PC-9 (cell line): ENCODE measurements at regions of chr7 and their contacts with region 1.

Region 1: GRCh38 chr7:100578338-100579183 is 4.9 kb upstream of the SAP25 start:
- DNase-seq: no peak
- H3K4me3 ChIP-seq: no peak overlapping the region
- H3K27ac ChIP-seq: no peak overlapping the region
- H3K4me1 ChIP-seq: peaks cover 6% of the 10 kb centered on the region
- H3K27me3 ChIP-seq: no peaks in the 10 kb centered on the region
- CTCF ChIP-seq: no peak

Region 2: DNA sequence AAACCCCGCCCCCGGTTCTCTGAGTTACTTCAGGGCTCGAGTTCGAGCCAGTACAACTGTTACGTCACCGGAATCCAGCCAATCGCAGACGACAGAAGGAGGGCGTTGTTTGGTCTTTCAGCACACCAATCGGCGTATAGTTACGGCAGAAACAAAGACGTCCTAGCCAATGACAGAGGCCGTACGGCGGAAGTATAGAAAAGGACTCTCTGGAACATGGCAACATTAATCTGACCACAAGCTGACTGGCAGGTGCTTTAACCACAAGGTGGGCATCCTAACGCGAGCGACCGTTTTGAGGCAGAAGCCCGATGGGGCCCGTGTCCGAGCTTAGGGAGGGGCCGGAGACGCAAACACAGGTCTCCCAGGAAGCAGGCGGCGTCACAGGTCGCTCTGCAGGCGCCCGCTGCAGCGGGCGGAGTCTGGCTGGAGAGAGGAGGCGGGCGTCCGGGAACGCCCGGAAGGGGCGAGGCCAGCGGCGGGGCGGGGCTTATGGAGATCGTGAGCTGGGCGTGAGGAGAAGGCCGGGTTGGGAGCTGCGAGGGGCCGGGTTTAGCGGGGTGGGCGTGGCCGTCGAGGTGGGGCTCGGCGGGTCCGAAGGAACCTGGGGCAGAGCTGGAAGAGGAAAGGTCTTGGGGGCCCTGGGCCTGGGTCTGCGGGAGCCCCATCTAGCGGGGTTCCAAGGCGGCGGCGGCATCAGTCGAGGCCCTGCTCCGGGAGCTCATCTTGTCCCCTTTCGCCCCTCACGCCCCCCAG is 33.6 kb after region 1 on chr7 and contains the start of gene MOSPD3:
- CTCF ChIA-PET with region 1: no interaction called
- POLR2A ChIA-PET with region 1: interaction called, 54 read pairs
- intact Hi-C with region 1: no loop called
- DNase-seq: peak; percentile 98 to 99
- H3K4me3 ChIP-seq: peak within 1 kb of the TSS; percentile 74
- H3K27ac ChIP-seq: peak within 1 kb of the TSS; percentile 60
- H3K4me1 ChIP-seq: peaks cover 5% of the 10 kb centered on the region
- H3K27me3 ChIP-seq: no peaks in the 10 kb centered on the region
- CTCF ChIP-seq: no peak
- total RNA-seq, gene MOSPD3: 38.1 and 38.8 TPM in 2 replicates